H1 (cell line): ENCODE measurements at regions of chr6 and their contacts with region 1.

Region 1: GRCh38 chr6:26122793-26123674 is 35.8 kb downstream of the HFE start:
- DNase-seq: peak; percentile 84 to 95
- H3K4me3 ChIP-seq: peak overlapping the region; percentile 82 to 100 (median 98)
- H3K27ac ChIP-seq: peak overlapping the region; percentile 91
- H3K4me1 ChIP-seq: peaks cover 1 to 9% (median 4%) of the 10 kb centered on the region in 4 experiments; a peak in 4 of 7 replicates
- H3K27me3 ChIP-seq: no peaks in the 10 kb centered on the region
- CTCF ChIP-seq: no peak
- EP300 ChIP-seq: peak in 1 of 2 experiments; percentile 98; a peak in 2 of 3 replicates
- POLR2A ChIP-seq: peak; percentile 96 to 97
- RAD21 ChIP-seq: no peak

Region 2: GRCh38 chr6:26054857-26055669 is 68.0 kb before region 1 on chr6:
- CTCF ChIA-PET with region 1: no interaction called
- POLR2A ChIA-PET with region 1: interaction called, 114 read pairs
- DNase-seq: peak; percentile 73 to 75
- H3K4me3 ChIP-seq: peak overlapping the region; percentile 82 to 95 (median 83)
- H3K27ac ChIP-seq: peak overlapping the region; percentile 93
- H3K4me1 ChIP-seq: peaks cover 0 to 3% (median 0%) of the 10 kb centered on the region in 4 experiments; a peak in 1 of 7 replicates
- H3K27me3 ChIP-seq: no peaks in the 10 kb centered on the region
- CTCF ChIP-seq: no peak
- EP300 ChIP-seq: no peak
- POLR2A ChIP-seq: peak; percentile 95 to 97
- RAD21 ChIP-seq: peak; percentile 14 to 29; a peak in 2 of 4 replicates

Region 3: DNA sequence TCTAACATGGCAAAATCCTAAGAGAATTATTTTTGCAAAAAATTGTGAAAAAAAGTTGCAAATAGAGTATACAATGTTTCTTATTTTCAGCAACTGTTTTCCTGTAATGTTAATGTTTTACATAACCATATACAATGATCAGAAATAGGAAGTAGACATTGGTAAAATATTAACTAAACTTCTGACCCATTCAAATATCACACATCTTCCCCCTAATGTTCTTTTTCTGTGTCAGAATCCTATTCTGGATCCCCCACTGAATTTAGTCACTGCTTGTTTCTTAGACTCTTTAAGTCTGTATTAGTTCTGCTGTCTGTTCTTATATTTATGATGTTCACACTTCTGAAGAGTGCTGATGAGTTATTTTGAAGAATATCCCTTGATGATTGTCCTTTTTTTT is 26.2 kb after region 1 on chr6:
- CTCF ChIA-PET with region 1: no interaction called
- POLR2A ChIA-PET with region 1: interaction called, 1,244 read pairs
- DNase-seq: no peak
- H3K4me3 ChIP-seq: no peak overlapping the region
- H3K27ac ChIP-seq: no peak overlapping the region
- H3K4me1 ChIP-seq: peaks cover 0 to 3% (median 3%) of the 10 kb centered on the region in 4 experiments; a peak in 4 of 7 replicates
- H3K27me3 ChIP-seq: no peaks in the 10 kb centered on the region
- CTCF ChIP-seq: no peak
- EP300 ChIP-seq: no peak
- POLR2A ChIP-seq: no peak
- RAD21 ChIP-seq: no peak

Region 4: GRCh38 chr6:26216356-26216885 is 93.4 kb after region 1 on chr6:
- CTCF ChIA-PET with region 1: no interaction called
- POLR2A ChIA-PET with region 1: interaction called, 132 read pairs
- DNase-seq: no peak
- H3K4me3 ChIP-seq: peak overlapping the region; percentile 87 to 98 (median 90)
- H3K27ac ChIP-seq: peak overlapping the region; percentile 97
- H3K4me1 ChIP-seq: peaks cover 0 to 8% (median 1%) of the 10 kb centered on the region in 4 experiments; a peak in 4 of 7 replicates
- H3K27me3 ChIP-seq: no peaks in the 10 kb centered on the region
- CTCF ChIP-seq: no peak
- EP300 ChIP-seq: no peak
- POLR2A ChIP-seq: peak; percentile 96 to 98
- RAD21 ChIP-seq: no peak

Region 5: DNA sequence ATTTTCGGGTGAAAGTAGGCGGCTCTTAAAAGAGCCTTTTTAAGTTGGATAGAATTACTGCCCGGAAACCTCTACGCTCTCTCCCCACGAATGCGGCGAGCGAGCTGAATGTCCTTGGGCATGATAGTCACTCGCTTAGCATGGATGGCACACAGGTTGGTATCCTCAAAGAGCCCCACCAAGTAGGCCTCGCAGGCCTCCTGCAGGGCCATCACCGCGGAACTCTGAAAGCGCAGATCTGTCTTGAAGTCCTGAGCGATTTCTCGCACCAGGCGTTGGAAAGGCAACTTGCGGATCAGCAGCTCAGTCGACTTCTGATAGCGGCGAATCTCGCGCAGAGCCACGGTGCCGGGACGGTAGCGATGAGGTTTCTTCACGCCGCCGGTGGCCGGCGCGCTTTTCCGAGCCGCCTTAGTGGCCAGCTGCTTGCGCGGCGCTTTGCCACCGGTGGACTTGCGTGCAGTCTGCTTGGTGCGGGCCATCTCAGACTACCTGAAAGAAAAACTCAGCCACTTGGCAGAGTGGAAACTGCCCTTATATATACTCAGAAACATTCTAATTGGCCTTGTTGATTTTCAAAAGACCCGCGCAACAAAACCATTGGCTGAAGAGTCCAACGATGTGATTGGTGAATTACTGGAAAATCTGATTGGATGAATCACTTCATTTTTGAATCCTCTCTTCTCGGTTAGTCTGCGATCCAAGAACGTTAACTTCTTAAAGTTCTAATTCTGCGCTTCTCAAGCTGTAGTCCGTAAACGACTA is 148.1 kb after region 1 on chr6:
- CTCF ChIA-PET with region 1: no interaction called
- POLR2A ChIA-PET with region 1: interaction called, 114 read pairs
- DNase-seq: peak in 1 of 2 experiments; percentile 85
- H3K4me3 ChIP-seq: peak overlapping the region; percentile 73 to 97 (median 88)
- H3K27ac ChIP-seq: peak overlapping the region; percentile 93
- H3K4me1 ChIP-seq: peaks cover 0 to 10% (median 4%) of the 10 kb centered on the region in 4 experiments; a peak in 4 of 7 replicates
- H3K27me3 ChIP-seq: no peaks in the 10 kb centered on the region
- CTCF ChIP-seq: no peak
- EP300 ChIP-seq: no peak
- POLR2A ChIP-seq: peak; percentile 94 to 100
- RAD21 ChIP-seq: no peak

Region 6: DNA sequence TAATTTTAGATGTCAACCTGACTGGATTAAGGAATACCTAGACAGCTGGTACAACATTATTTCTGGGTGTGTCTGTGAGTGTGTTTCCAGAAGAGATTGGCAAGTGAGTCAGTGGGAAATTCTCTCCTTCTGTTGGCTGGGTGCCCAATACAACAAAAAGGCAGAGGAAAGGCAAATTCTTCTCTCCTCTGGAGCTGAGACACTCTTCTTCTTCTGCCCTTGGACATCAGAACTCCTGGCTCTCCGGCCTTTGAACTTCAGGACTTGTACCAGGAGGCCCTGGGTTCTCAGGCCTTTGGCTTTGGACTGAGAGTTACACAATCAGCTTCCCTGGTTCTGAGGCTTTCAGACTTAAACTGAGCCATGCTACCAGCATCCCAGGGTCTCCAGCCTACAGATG is 271.3 kb after region 1 on chr6:
- CTCF ChIA-PET with region 1: no interaction called
- POLR2A ChIA-PET with region 1: no interaction called
- DNase-seq: no peak
- H3K4me3 ChIP-seq: no peak overlapping the region
- H3K27ac ChIP-seq: no peak overlapping the region
- H3K4me1 ChIP-seq: no peaks in the 10 kb centered on the region
- H3K27me3 ChIP-seq: no peaks in the 10 kb centered on the region
- CTCF ChIP-seq: no peak
- EP300 ChIP-seq: no peak
- POLR2A ChIP-seq: no peak
- RAD21 ChIP-seq: no peak

Region 7: GRCh38 chr6:26520853-26521599 is 398.0 kb after region 1 on chr6:
- CTCF ChIA-PET with region 1: no interaction called
- POLR2A ChIA-PET with region 1: no interaction called
- DNase-seq: peak in 1 of 2 experiments; percentile 91
- H3K4me3 ChIP-seq: peak overlapping the region; percentile 58 to 94 (median 84)
- H3K27ac ChIP-seq: peak overlapping the region; percentile 84; the same call in 1 of the 2 replicates
- H3K4me1 ChIP-seq: peaks cover 0 to 3% (median 2%) of the 10 kb centered on the region in 4 experiments; a peak in 2 of 7 replicates
- H3K27me3 ChIP-seq: no peaks in the 10 kb centered on the region
- CTCF ChIP-seq: no peak
- EP300 ChIP-seq: no peak
- POLR2A ChIP-seq: peak; percentile 18 to 46; a peak in 2 of 3 replicates
- RAD21 ChIP-seq: no peak

Region 8: DNA sequence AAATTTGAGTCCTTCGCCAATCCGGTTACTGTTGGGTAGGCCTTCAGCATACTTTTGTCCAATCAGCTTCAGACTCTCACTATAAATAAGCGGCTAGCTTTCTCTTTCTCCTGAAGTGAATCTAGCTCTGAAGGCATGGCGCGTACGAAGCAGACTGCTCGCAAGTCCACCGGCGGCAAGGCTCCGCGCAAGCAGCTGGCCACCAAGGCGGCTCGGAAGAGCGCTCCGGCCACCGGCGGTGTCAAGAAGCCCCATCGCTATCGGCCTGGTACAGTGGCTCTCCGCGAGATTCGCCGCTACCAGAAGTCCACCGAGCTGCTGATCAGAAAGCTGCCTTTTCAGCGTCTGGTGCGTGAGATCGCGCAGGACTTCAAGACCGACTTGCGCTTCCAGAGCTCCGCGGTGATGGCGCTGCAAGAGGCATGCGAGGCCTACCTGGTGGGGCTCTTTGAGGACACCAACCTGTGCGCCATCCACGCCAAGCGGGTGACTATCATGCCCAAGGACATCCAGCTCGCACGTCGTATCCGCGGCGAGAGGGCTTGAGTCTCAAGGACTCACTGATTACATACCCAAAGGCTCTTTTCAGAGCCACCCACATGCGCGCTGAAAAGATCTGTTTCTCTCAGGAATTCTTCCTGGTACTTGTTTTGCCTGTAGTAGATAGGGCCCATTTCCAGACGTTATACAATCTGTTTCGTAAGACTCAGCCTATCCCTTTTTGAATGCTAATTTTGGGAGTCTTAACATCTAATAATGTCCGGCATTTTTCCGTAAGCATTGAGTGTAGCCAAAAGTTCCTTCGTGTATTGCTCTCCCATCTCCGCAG is 1687.1 kb after region 1 on chr6:
- CTCF ChIA-PET with region 1: no interaction called
- POLR2A ChIA-PET with region 1: interaction called, 43 read pairs
- DNase-seq: peak in 1 of 2 experiments; percentile 78
- H3K4me3 ChIP-seq: peak overlapping the region; percentile 78 to 96 (median 89)
- H3K27ac ChIP-seq: peak overlapping the region; percentile 84
- H3K4me1 ChIP-seq: peaks cover 0 to 6% (median 3%) of the 10 kb centered on the region in 4 experiments; a peak in 4 of 7 replicates
- H3K27me3 ChIP-seq: no peaks in the 10 kb centered on the region
- CTCF ChIP-seq: peak in 1 of 3 experiments; percentile 6; a peak in 1 of 4 replicates
- EP300 ChIP-seq: no peak
- POLR2A ChIP-seq: peak; percentile 98 to 100
- RAD21 ChIP-seq: no peak

Region 9: GRCh38 chr6:27893059-27893835 is 1770.2 kb after region 1 on chr6:
- CTCF ChIA-PET with region 1: no interaction called
- POLR2A ChIA-PET with region 1: interaction called, 14 read pairs
- DNase-seq: peak; percentile 88 to 96
- H3K4me3 ChIP-seq: peak overlapping the region; percentile 94 to 99 (median 97)
- H3K27ac ChIP-seq: peak overlapping the region; percentile 95
- H3K4me1 ChIP-seq: peaks cover 3 to 9% (median 3%) of the 10 kb centered on the region in 4 experiments; a peak in 5 of 7 replicates
- H3K27me3 ChIP-seq: no peaks in the 10 kb centered on the region
- CTCF ChIP-seq: no peak
- EP300 ChIP-seq: no peak
- POLR2A ChIP-seq: peak; percentile 99 to 100
- RAD21 ChIP-seq: no peak